ENCODE measurements at regions of chr11 and their contacts with region 1.

Region 1: DNA sequence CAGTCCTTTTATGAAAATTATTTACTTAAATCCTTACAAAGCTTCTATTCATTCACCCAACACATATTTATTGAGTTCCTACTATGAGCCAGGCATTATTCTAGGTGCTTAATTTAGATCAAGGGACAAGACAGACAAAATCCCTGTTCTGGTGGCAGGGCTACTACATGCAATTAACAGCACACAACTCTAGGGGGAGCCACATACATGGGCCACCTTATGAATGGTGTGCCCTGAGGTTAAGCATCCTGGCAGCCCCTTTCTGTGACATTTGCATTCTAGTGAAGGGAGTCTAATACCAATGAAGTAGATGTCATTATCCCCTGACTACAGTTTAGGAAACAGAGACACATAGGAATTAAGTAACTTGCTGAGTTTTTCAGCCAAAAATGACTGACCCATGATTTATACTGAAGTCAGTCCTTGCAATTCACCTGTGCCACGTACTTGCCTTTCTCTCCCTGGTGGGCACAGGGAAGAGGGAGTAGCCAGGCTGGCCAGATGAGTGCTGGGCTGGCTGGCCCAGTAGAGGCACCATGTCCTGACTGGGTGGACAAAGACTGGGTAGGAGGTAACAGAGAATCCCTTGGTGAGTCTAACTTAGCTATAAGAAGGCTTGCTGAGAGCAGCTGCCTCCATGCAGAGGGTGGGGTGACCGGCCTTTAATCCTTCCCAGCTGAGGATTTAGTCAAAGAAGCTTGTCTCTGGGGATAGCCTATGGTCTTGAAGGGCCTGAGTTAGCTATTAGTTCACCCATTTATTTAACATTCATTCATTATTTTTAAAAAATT is 52.0 kb upstream of the ELF5 start:
- DNase-seq: peak in 1 of 4 donors; percentile 26
- ATAC-seq: no peak
- H3K4me3 ChIP-seq: no peak overlapping the region
- H3K27ac ChIP-seq: no peak overlapping the region
- H3K4me1 ChIP-seq: no peaks in the 10 kb centered on the region
- H3K27me3 ChIP-seq: no peaks in the 10 kb centered on the region
- CTCF ChIP-seq: peak in 4 of 7 experiments; percentile 24 to 58 (median 32)
- POLR2A ChIP-seq: no peak

Region 2: GRCh38 chr11:34480314-34480713 is 85.3 kb before region 1 on chr11:
- intact Hi-C with region 1: no loop called
- DNase-seq: no peak
- ATAC-seq: no peak
- H3K4me3 ChIP-seq: no peak overlapping the region
- H3K27ac ChIP-seq: no peak overlapping the region
- H3K4me1 ChIP-seq: no peaks in the 10 kb centered on the region
- H3K27me3 ChIP-seq: no peaks in the 10 kb centered on the region
- CTCF ChIP-seq: no peak
- POLR2A ChIP-seq: no peak

Region 3: DNA sequence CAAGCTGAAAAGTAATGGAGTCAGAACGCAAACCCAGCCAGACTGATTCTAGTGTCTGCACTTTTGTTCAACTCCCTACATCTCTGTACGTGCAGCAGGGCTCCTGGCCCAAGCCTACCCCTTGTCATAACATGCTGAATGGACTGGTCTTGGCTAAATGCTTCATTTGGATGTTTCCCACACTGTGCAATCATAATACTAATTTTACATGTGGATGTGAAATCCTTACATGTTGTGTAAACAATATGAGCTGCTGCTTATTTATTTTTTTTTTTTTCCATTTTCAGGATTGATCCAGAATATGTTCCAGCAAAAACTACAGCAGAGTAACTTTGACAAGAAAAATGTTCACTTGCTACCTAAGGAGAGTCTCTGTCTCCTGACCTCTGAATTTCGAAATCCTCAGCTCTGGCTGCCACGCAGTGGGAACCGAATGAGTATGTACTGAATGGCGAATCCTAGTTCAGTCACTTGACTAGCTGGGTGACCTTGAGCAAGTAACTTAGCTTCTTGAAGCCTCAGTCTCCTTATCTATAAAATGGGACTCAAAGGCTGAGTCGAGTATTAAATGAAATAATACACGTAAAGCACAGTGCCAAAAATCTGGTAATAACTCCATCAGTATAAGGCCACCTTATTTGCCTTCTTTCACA is 188.7 kb after region 1 on chr11:
- intact Hi-C with region 1: no loop called
- DNase-seq: no peak
- ATAC-seq: no peak
- H3K4me3 ChIP-seq: no peak overlapping the region
- H3K27ac ChIP-seq: no peak overlapping the region
- H3K4me1 ChIP-seq: peaks cover 8% of the 10 kb centered on the region
- H3K27me3 ChIP-seq: no peaks in the 10 kb centered on the region
- CTCF ChIP-seq: no peak
- POLR2A ChIP-seq: no peak

Region 4: DNA sequence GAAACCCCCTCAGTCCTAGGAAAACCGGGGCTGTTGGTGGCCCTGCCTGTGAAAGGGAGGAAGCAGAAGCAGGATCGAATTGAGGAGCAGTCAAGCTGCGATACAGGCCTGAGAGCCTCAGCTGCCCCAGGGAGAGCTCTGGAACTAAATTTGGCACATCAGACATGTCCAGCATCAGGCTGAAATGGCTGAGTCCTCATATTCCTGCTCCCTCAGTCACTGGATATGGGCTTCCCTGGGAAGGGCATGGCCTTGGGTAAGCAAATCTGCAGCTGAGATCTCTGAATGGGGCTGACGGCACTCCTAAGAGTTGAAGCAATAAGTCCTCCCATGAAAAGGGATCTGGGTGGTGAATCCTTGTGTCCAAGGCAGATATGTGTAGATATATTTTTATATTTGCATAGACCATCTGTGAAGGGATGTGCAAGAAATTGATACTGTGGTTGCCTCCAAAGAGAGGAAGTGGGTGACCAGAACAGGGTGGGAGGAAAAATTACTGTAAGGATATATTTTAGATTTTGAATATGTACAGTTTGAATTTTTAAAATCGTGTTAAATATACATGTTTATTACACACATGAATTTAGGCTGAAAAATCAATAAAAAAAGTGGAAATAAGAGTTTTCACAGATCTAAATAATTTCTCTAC is 305.1 kb after region 1 on chr11:
- intact Hi-C with region 1: loop called (anchors 10 kb)
- DNase-seq: no peak
- ATAC-seq: no peak
- H3K4me3 ChIP-seq: no peak overlapping the region
- H3K27ac ChIP-seq: no peak overlapping the region
- H3K4me1 ChIP-seq: no peaks in the 10 kb centered on the region
- H3K27me3 ChIP-seq: no peaks in the 10 kb centered on the region
- CTCF ChIP-seq: no peak
- POLR2A ChIP-seq: no peak

Measured in body of pancreas (tissue), 4 donors.